Sigmoid colon (tissue), 7 donors: ENCODE measurements at regions of chr6 and their contacts with region 1.

Region 1: GRCh38 chr6:75526502-75527127 is 33.0 kb upstream of the FILIP1 start:
- DNase-seq: peak; percentile 75
- H3K4me3 ChIP-seq: no peak overlapping the region
- H3K27ac ChIP-seq: no peak overlapping the region
- H3K4me1 ChIP-seq: peaks cover 0 to 14% (median 6%) of the 10 kb centered on the region in 4 donors
- H3K27me3 ChIP-seq: no peaks in the 10 kb centered on the region
- CTCF ChIP-seq: peak; percentile 52 to 75 (median 72)
- EP300 ChIP-seq: no peak
- POLR2A ChIP-seq: no peak

Region 2: DNA sequence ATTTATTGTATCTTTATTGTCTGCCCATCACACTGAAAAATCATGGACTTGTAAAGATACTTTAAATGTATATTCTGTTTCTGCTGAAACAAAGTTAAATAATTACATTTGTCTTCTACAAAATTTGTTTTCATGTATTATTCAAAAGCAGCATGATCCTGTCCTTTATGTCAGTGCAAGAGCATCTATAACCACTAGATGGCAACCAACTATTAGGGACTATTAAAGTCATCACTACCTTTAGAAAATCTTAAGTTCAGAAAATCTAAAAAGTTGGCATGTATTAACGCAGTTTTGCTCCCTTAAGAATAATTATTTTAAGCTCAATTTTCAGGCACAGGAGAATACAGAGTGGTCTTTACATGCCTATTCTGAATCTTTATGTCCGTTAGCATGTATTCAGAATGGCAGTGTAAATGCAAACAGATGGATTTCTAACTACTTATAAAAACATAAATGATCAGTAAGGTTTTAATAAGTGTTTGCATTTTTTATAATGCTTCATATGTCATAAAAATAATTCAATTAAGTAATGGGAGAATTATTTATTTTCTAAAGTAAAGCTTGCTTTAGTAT is 259.8 kb before region 1 on chr6:
- intact Hi-C with region 1: loop called (anchors 1 kb)
- DNase-seq: no peak
- H3K4me3 ChIP-seq: no peak overlapping the region
- H3K27ac ChIP-seq: peak overlapping the region in 1 of 4 donors; percentile 52
- H3K4me1 ChIP-seq: peaks cover 0 to 40% (median 22%) of the 10 kb centered on the region in 4 donors
- H3K27me3 ChIP-seq: no peaks in the 10 kb centered on the region
- CTCF ChIP-seq: peak; percentile 55 to 82 (median 73)
- EP300 ChIP-seq: no peak
- POLR2A ChIP-seq: no peak

Region 3: GRCh38 chr6:75296811-75297779 is 229.5 kb before region 1 on chr6:
- intact Hi-C with region 1: loop called (anchors 1 kb)
- DNase-seq: no peak
- H3K4me3 ChIP-seq: no peak overlapping the region
- H3K27ac ChIP-seq: peak overlapping the region in 1 of 4 donors; percentile 24
- H3K4me1 ChIP-seq: peaks cover 0 to 34% (median 26%) of the 10 kb centered on the region in 4 donors
- H3K27me3 ChIP-seq: no peaks in the 10 kb centered on the region
- CTCF ChIP-seq: peak; percentile 20 to 67 (median 62)
- EP300 ChIP-seq: no peak
- POLR2A ChIP-seq: no peak

Region 4: DNA sequence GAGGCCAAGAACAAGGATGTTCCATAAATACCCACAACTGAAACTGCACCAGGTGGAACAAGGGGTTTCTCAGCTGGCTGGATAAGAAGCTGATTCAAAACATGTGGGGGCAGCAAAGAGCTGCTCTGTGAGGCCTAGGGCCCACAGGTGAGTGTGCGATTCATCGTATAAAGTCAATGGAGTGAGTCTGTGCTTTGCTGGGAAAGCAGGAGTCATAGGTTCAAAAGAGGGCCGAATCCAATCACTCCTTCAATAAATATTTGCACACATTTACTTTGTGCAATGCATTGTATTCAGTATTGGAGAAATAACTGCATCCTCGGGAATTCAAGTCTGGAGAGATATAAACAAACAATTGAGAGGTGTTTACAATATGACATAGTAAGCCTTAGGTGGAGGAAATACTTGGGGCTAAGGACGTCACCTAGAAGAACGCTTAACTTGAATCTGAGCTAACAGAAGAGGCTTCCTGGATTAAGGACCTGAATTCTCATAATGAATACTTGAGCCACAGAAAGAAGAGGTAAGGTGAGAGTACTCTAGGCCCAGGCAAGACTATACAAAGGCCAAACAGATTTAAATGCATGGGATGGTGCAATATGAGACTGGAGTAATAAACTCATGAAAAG is 158.3 kb before region 1 on chr6:
- intact Hi-C with region 1: loop called (anchors 2 kb)
- DNase-seq: peak; percentile 62
- H3K4me3 ChIP-seq: no peak overlapping the region
- H3K27ac ChIP-seq: peak overlapping the region; percentile 10 to 70 (median 64)
- H3K4me1 ChIP-seq: peaks cover 0 to 35% (median 29%) of the 10 kb centered on the region in 4 donors
- H3K27me3 ChIP-seq: no peaks in the 10 kb centered on the region
- CTCF ChIP-seq: peak in 3 of 4 experiments; percentile 33 to 60 (median 48)
- EP300 ChIP-seq: no peak
- POLR2A ChIP-seq: no peak

Region 5: GRCh38 chr6:75631859-75632635 is 105.4 kb after region 1 on chr6:
- intact Hi-C with region 1: no loop called
- DNase-seq: no peak
- H3K4me3 ChIP-seq: no peak overlapping the region
- H3K27ac ChIP-seq: peak overlapping the region in 2 of 4 donors; percentile 15 to 51
- H3K4me1 ChIP-seq: peaks cover 0 to 34% (median 20%) of the 10 kb centered on the region in 4 donors
- H3K27me3 ChIP-seq: no peaks in the 10 kb centered on the region
- CTCF ChIP-seq: no peak
- EP300 ChIP-seq: no peak
- POLR2A ChIP-seq: no peak